ENCODE measurements at regions of chr20 and their contacts with region 1.

Region 1: GRCh38 chr20:561437-562231 is 18.0 kb upstream of the CSNK2A1 start:
- DNase-seq: peak; percentile 86
- ATAC-seq: peak; percentile 89
- H3K4me3 ChIP-seq: no peak overlapping the region
- H3K27ac ChIP-seq: no peak overlapping the region
- H3K4me1 ChIP-seq: no peaks in the 10 kb centered on the region
- H3K27me3 ChIP-seq: peaks cover 7 to 43% of the 10 kb centered on the region in 2 experiments; a peak in 3 of 5 replicates
- CTCF ChIP-seq: peak; percentile 99
- EP300 ChIP-seq: no peak
- POLR2A ChIP-seq: no peak
- RAD21 ChIP-seq: peak; percentile 98

Region 2: GRCh38 chr20:588932-589672 is 27.5 kb after region 1 on chr20:
- CTCF ChIA-PET with region 1: no interaction called
- POLR2A ChIA-PET with region 1: no interaction called
- in situ Hi-C with region 1: no loop called
- intact Hi-C with region 1: no loop called
- DNase-seq: no peak
- ATAC-seq: peak; percentile 55
- H3K4me3 ChIP-seq: no peak overlapping the region
- H3K27ac ChIP-seq: no peak overlapping the region
- H3K4me1 ChIP-seq: peaks cover 8% of the 10 kb centered on the region; the same call in 1 of the 2 replicates
- H3K27me3 ChIP-seq: peaks cover 1 to 24% of the 10 kb centered on the region in 2 experiments; a peak in 4 of 5 replicates
- CTCF ChIP-seq: peak; percentile 30
- EP300 ChIP-seq: no peak
- POLR2A ChIP-seq: no peak
- RAD21 ChIP-seq: no peak

Region 3: DNA sequence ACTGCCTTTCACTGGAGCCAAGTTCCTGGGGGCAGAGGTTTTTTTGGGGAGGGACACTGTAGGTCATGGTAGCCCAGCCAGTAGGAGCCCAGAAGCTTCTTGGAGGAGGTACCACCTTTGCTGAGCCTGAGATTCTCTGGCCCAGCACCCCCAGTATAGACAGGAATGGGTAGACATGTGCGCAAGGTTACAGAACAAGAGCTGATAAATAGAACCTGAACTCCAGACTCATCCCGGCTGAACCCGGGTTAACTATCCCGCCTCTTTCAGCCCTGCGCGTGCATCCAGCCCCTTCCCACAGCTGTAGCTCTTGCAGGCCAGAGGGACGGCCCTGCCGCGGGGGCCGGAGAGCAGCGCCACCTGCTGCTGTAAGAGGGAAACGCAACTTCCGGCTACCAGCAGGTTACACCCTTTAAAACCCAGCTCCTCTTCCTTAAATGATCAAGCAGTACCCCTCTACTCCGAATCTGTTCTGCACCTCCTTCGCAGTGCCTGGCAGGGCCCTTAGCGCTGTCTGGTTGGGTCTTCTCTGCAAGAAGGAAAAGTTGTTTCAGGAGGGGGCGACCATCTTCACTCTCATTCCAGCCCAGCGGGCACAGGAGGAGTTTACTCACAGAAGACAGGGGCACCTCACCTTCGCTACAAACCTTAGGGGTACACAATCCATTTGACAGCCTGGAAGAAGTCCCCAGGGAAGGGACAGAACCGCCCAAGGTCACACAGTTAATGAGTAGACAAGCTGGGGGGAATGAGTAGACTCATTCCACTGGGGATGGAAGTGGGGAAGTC is 83.9 kb after region 1 on chr20:
- CTCF ChIA-PET with region 1: interaction called, 36 read pairs
- POLR2A ChIA-PET with region 1: no interaction called
- in situ Hi-C with region 1: loop called (anchors 5 kb)
- intact Hi-C with region 1: loop called (anchors 1 kb)
- DNase-seq: peak; percentile 90
- ATAC-seq: peak; percentile 78
- H3K4me3 ChIP-seq: peak overlapping the region; percentile 15 to 71 (median 58)
- H3K27ac ChIP-seq: peak overlapping the region; percentile 86
- H3K4me1 ChIP-seq: peaks cover 49% of the 10 kb centered on the region
- H3K27me3 ChIP-seq: no peaks in the 10 kb centered on the region
- CTCF ChIP-seq: peak; percentile 100
- EP300 ChIP-seq: peak; percentile 32 to 53; a peak in 2 of 4 replicates
- POLR2A ChIP-seq: peak; percentile 43 to 53; a peak in 2 of 4 replicates
- RAD21 ChIP-seq: peak; percentile 99

Region 4: DNA sequence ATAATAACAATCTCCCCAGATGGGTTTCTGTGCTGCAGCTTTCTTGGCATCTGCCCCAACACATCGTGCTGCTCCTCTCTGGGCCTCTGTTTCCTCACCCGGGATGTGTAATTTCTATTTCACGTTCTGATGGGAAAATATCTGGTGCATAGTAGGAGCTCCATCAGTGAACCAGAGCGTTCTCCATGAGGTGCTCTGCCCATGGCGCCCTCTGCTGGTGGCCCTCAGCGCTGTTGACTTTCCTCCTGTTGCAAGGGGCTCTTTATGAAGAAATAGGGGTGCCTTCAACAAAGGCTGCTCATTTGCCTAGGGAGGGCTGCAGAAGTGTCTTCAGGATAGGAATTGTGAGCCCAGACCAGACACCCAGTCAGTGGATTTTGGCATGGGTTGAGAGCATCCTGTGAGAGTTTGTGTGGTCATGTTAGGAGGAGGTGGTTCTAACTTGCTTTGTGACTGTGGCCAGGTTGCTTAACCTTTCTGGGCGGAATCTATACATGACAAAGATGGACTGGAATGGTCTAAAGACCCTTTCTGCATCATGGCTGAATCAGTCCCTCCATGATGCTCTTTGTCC is 105.8 kb after region 1 on chr20:
- CTCF ChIA-PET with region 1: interaction called, 32 read pairs
- POLR2A ChIA-PET with region 1: no interaction called
- in situ Hi-C with region 1: no loop called
- intact Hi-C with region 1: loop called (anchors 1 kb)
- DNase-seq: peak; percentile 48
- ATAC-seq: peak; percentile 55
- H3K4me3 ChIP-seq: no peak overlapping the region
- H3K27ac ChIP-seq: no peak overlapping the region
- H3K4me1 ChIP-seq: peaks cover 6% of the 10 kb centered on the region
- H3K27me3 ChIP-seq: peaks cover 13 to 64% of the 10 kb centered on the region in 2 experiments; a peak in 4 of 5 replicates
- CTCF ChIP-seq: peak; percentile 89
- EP300 ChIP-seq: no peak
- POLR2A ChIP-seq: no peak
- RAD21 ChIP-seq: peak; percentile 79

Region 5: DNA sequence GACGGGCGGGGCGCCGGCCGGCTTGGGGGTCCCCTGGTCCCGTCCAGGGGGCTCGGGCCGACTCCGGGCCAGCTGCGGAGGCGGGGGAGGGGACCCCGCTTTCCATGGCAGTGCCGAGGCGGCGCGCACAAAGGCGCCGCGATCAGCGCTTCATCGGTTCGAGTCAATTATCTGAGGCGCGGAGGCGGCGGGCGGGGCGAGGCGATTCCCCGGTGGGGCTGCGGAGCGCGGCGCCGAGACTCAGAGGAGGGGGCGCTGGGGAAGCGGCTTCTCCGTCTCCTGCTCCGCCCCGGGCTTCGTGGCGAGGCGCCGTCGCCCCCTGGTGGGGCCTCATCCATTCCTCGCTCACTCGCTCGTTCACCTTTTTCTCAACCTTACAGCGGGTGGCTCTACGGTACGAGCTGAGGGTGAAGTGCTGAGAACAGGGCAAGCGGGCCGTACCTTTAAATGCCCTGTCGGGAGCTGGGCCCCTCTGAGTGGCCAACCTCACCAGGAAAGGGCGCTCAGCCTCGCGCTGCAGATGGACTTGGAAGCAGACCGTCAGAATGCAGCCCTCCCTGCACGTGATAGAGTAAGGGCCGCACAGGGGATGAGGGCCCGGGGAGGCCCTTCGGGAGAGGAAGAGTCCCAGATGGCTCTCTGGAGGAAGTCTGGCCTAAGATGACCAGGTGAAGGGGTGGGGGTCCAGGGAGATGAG is 166.8 kb after region 1 on chr20:
- CTCF ChIA-PET with region 1: interaction called, 31 read pairs
- POLR2A ChIA-PET with region 1: no interaction called
- in situ Hi-C with region 1: no loop called
- intact Hi-C with region 1: loop called (anchors 1 kb)
- DNase-seq: peak; percentile 51
- ATAC-seq: peak; percentile 95
- H3K4me3 ChIP-seq: peak overlapping the region; percentile 58 to 74 (median 61)
- H3K27ac ChIP-seq: no peak overlapping the region
- H3K4me1 ChIP-seq: peaks cover 6% of the 10 kb centered on the region; the same call in 1 of the 2 replicates
- H3K27me3 ChIP-seq: peaks cover 12 to 60% of the 10 kb centered on the region in 2 experiments
- CTCF ChIP-seq: peak; percentile 97
- EP300 ChIP-seq: no peak
- POLR2A ChIP-seq: no peak
- RAD21 ChIP-seq: peak; percentile 96

Region 6: GRCh38 chr20:733861-734260 is 172.2 kb after region 1 on chr20:
- CTCF ChIA-PET with region 1: interaction called, 56 read pairs
- POLR2A ChIA-PET with region 1: no interaction called
- in situ Hi-C with region 1: loop called (anchors 5 kb)
- intact Hi-C with region 1: loop called (anchors 1 kb)
- DNase-seq: no peak
- ATAC-seq: no peak
- H3K4me3 ChIP-seq: no peak overlapping the region
- H3K27ac ChIP-seq: no peak overlapping the region
- H3K4me1 ChIP-seq: peaks cover 3% of the 10 kb centered on the region; the same call in 1 of the 2 replicates
- H3K27me3 ChIP-seq: peaks cover 3 to 26% of the 10 kb centered on the region in 2 experiments
- CTCF ChIP-seq: no peak
- EP300 ChIP-seq: no peak
- POLR2A ChIP-seq: no peak
- RAD21 ChIP-seq: no peak

Region 7: DNA sequence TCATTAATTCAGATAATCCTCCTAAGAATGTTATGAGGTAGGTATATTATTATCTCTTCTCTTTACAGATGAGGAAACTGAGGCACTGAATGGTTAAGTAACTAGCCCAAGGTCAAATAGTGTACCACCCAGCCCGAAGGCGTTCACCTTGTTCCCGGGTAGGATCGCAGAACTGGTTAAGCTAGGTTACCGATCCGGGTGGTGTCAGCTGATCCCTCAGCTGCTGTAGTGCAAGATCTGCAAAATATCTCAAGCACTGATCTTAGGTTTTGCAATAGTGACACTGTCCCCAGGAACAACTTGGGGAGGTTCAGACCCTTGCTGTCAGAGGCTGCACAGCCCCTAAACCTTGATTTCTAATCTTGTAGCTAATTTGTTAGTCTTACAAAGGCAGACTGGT is 178.5 kb after region 1 on chr20:
- CTCF ChIA-PET with region 1: interaction called, 56 read pairs
- POLR2A ChIA-PET with region 1: no interaction called
- in situ Hi-C with region 1: loop called (anchors 5 kb)
- intact Hi-C with region 1: loop called (anchors 1 kb)
- DNase-seq: no peak
- ATAC-seq: no peak
- H3K4me3 ChIP-seq: no peak overlapping the region
- H3K27ac ChIP-seq: no peak overlapping the region
- H3K4me1 ChIP-seq: peaks cover 13% of the 10 kb centered on the region
- H3K27me3 ChIP-seq: peaks cover 0 to 14% of the 10 kb centered on the region in 2 experiments; a peak in 1 of 5 replicates
- CTCF ChIP-seq: no peak
- EP300 ChIP-seq: no peak
- POLR2A ChIP-seq: no peak
- RAD21 ChIP-seq: no peak